ENCODE measurements at regions of chr3 and their contacts with region 1.

Region 1: DNA sequence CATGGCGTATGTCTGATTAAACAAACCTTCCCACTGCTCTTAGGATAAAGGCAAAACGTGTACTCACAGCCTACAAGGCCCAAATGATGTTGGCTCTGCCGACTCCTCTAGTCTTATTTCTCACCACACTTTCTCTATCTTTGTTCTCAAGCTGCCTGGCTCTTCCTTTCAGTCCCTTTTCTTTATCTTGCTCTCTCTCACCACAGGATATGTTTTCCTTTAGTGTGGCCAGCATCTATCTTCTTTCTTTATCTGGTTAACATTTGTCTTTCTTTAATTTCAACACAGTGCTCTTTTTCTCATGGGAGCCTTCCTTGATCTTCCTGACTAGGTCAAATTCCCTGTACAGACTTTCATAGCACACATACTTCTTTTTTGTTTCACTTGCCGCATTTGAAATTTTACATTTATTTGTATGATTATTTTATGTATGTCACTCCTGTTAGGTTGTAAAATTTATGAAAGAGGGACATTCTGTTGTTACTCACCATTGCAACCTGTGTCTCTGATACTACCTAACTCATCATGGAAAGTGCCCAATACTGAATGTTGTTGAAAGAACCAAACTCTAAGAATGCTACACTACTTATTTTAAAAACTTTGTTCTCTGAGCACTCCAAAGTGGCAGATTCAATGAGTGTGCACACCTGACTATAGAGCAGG is 328.9 kb upstream of the CBLB start:
- DNase-seq: no peak
- H3K4me3 Mint-ChIP-seq: no peak overlapping the region
- H3K27ac Mint-ChIP-seq: no peak overlapping the region
- H3K4me1 Mint-ChIP-seq: peaks cover 24% of the 10 kb centered on the region
- H3K27me3 Mint-ChIP-seq: no peaks in the 10 kb centered on the region

Region 2: DNA sequence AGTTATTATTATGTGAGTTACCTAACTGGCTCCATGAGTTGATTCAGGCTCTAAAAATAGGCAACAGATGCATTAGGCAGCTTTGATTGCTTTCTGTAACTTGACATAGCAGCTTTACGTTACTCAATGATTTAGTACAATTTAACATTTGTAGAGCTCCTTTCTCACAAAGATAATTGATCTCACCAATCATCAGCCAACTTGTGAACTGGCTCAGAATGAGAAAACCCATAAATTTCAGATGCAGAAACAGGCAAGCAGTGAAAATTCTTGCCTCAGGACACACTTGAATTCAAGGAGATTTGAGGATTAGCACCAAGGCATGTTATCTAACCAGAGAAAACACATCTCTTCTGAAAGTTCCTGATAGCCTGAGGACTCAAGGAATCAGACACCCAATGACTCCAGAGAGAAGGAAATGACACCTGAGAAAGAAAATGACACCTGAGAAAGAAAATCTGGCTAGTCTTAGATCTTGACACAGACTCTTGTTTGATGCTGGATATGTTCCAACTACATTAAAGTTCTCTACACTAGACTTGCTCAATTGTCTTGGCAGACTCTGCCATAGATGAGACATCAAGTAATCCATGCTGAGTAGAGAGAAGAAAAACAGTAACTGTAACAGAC is 13.8 kb before region 1 on chr3:
- CTCF ChIA-PET with region 1: no interaction called
- intact Hi-C with region 1: loop called (anchors 1 kb)
- DNase-seq: no peak
- H3K4me3 Mint-ChIP-seq: no peak overlapping the region
- H3K27ac Mint-ChIP-seq: no peak overlapping the region
- H3K4me1 Mint-ChIP-seq: peaks cover 42% of the 10 kb centered on the region
- H3K27me3 Mint-ChIP-seq: no peaks in the 10 kb centered on the region